ENCODE measurements at regions of chr4 and their contacts with region 1.

Region 1: GRCh38 chr4:176377780-176378179 is 58.0 kb downstream of the SPCS3 start:
- DNase-seq: peak; percentile 41
- H3K4me3 ChIP-seq: no peak overlapping the region
- H3K27ac ChIP-seq: no peak overlapping the region
- H3K4me1 ChIP-seq: no peaks in the 10 kb centered on the region
- H3K27me3 ChIP-seq: no peaks in the 10 kb centered on the region
- CTCF ChIP-seq: peak; percentile 41 to 58

Region 2: DNA sequence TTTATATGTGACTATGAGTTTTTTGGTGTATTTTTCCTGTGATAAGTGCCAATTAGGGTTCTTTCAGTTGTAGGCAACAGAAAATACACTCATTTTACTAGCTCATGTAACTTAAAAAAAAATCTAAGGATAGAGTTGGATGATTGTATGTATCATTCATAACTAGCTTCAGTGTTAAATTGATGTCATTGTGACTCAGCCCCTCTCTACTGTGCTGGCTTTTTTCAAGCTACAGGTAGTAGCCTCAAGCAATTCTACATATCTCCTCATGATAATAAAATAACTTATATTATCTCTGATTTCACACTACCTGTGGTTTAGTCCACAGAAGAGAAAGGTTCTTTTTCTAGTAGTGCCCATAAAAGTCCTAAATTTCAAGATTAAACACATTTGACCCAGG is 300.2 kb before region 1 on chr4:
- CTCF ChIA-PET with region 1: no interaction called
- dilution Hi-C with region 1: no loop called
- in situ Hi-C with region 1: no loop called
- intact Hi-C with region 1: no loop called
- DNase-seq: no peak
- H3K4me3 ChIP-seq: no peak overlapping the region
- H3K27ac ChIP-seq: no peak overlapping the region
- H3K4me1 ChIP-seq: no peaks in the 10 kb centered on the region
- H3K27me3 ChIP-seq: no peaks in the 10 kb centered on the region
- CTCF ChIP-seq: no peak

Region 3: DNA sequence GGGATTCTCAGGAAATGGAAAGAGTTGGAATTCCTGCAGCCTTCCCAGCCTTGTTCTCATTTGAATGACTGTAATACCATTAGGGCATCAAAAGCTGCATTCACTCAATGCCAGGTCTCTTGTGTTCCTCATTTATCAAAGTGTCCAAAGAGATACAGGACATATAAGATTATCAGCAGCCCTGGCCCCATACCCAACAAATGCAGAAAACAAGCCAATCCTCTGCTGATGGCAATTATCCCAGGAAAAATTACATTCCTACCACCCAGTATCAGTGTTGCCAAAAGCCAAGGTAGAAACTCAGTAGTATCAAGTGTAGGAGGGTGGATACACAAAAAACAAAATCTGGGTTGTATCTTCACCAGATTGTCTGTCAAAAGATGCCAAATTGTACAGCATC is 90.2 kb before region 1 on chr4:
- CTCF ChIA-PET with region 1: no interaction called
- dilution Hi-C with region 1: no loop called
- in situ Hi-C with region 1: no loop called
- intact Hi-C with region 1: no loop called
- DNase-seq: no peak
- H3K4me3 ChIP-seq: no peak overlapping the region
- H3K27ac ChIP-seq: no peak overlapping the region
- H3K4me1 ChIP-seq: no peaks in the 10 kb centered on the region
- H3K27me3 ChIP-seq: peaks cover 2% of the 10 kb centered on the region
- CTCF ChIP-seq: no peak

Region 4: DNA sequence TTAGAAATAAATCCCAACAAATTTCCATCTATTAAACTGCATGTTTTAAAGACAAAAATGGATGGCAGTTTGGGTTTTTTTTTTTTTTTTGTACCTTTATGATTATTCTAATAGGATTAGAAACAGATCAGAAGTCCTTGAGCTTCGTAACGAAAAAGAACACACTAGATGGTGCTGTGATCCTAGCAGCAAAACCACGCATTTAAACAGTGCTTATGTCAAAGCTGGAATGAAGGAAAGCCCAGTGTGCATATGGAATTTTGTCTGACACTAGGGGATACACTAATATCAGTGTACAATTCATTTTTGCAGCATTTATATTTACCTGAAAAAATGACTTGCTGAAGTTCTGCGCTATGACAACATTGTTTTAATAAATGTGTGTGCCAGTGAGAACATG is 185.8 kb after region 1 on chr4:
- CTCF ChIA-PET with region 1: no interaction called
- dilution Hi-C with region 1: no loop called
- in situ Hi-C with region 1: no loop called
- intact Hi-C with region 1: loop called (anchors 2 kb)
- DNase-seq: no peak
- H3K4me3 ChIP-seq: no peak overlapping the region
- H3K27ac ChIP-seq: no peak overlapping the region
- H3K4me1 ChIP-seq: peaks cover 6% of the 10 kb centered on the region
- H3K27me3 ChIP-seq: peaks cover 1% of the 10 kb centered on the region
- CTCF ChIP-seq: peak in 1 of 2 donors; percentile 10

Region 5: DNA sequence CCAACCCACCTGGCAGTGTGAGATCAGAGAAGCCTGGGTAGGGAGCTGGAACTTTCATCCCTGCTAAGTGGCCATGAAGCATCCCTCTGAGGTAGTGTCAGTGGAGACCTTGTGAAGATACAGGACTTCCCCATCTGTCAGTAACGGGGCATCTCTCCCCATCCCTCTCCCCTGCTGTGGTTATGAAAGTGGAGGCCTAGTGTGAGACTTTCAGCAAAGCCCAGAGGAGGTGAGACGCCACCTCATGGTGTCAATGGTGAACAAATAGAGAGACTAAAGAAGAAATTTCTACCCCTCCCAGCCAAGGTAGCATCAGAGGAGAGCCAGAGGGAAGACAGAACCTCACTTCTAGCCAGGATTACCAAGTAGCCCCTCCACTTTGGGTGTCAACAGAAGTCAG is 264.7 kb after region 1 on chr4:
- CTCF ChIA-PET with region 1: no interaction called
- dilution Hi-C with region 1: no loop called
- in situ Hi-C with region 1: loop called in 1 of 2 experiments (anchors 25 kb)
- intact Hi-C with region 1: loop called (anchors 5 kb)
- DNase-seq: no peak
- H3K4me3 ChIP-seq: no peak overlapping the region
- H3K27ac ChIP-seq: no peak overlapping the region
- H3K4me1 ChIP-seq: peaks cover 12% of the 10 kb centered on the region
- H3K27me3 ChIP-seq: no peaks in the 10 kb centered on the region
- CTCF ChIP-seq: no peak

Region 6: DNA sequence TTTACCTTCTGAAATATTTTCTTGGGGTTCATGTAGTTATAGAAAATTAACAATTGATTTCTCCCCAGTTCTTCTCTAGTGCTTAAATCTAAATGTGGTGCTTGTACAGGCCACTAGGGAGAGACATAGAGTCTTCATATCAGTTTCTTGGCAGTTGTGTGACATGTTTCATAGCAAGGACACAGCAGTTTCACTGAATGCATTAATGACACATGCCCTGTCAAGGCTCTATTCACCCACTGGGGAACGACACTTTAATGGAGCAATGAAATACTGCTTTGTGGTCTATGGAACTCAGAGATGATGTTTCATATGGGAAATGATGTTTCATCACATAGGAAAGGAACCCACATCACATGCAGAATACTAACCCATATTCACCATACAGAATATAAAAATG is 412.2 kb after region 1 on chr4:
- CTCF ChIA-PET with region 1: no interaction called
- dilution Hi-C with region 1: no loop called
- in situ Hi-C with region 1: loop called in 1 of 2 experiments (anchors 25 kb)
- intact Hi-C with region 1: no loop called
- DNase-seq: peak; percentile 80
- H3K4me3 ChIP-seq: peak overlapping the region in 2 of 3 experiments; percentile 81 to 94
- H3K27ac ChIP-seq: peak overlapping the region; percentile 73
- H3K4me1 ChIP-seq: peaks cover 25% of the 10 kb centered on the region
- H3K27me3 ChIP-seq: no peaks in the 10 kb centered on the region
- CTCF ChIP-seq: peak; percentile 74 to 89

Region 7: DNA sequence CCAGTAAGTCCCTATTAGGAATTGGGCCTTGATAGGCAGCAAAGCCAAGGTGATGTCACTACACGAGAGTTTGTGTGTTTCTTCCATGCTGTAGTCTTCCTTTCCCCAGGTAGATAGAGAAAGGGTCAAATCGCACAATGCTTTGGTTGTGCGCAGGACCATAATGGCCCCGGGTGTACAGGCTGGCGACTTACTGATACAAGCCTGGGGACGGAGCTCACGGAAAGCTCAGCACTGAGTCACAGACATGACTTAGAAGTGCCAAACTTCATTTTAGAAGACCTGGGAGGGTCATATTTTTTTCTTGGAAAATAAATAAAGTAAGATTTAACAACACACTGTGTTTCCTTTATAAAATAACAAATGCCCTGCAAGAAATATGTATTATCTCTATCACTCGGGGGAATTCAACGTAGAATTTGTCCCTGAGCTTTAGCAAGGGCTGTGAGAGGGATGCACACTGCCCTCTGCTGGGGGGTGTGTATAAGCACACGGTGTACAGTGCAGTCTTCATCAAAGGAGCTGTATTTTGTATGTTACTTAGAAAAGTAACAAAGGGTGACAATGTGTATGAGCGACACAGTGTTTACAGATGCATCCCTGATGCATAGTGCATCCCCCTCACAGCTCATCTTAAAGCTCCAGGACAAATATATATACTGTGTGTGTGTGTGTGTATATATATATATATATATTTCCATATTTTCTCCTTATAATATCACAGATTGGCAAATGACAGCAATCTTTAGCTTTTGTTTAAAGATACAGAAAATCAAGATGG is 669.5 kb after region 1 on chr4:
- CTCF ChIA-PET with region 1: no interaction called
- dilution Hi-C with region 1: loop called (anchors 25 kb)
- in situ Hi-C with region 1: loop called (anchors 10 to 25 kb)
- intact Hi-C with region 1: loop called (anchors 1 kb)
- DNase-seq: peak; percentile 49
- H3K4me3 ChIP-seq: no peak overlapping the region
- H3K27ac ChIP-seq: no peak overlapping the region
- H3K4me1 ChIP-seq: no peaks in the 10 kb centered on the region
- H3K27me3 ChIP-seq: no peaks in the 10 kb centered on the region
- CTCF ChIP-seq: peak; percentile 85 to 88

Region 8: GRCh38 chr4:177250056-177250696 is 872.4 kb after region 1 on chr4:
- CTCF ChIA-PET with region 1: no interaction called
- dilution Hi-C with region 1: no loop called
- in situ Hi-C with region 1: no loop called
- intact Hi-C with region 1: loop called (anchors 5 kb)
- DNase-seq: peak; percentile 58
- H3K4me3 ChIP-seq: no peak overlapping the region
- H3K27ac ChIP-seq: no peak overlapping the region
- H3K4me1 ChIP-seq: no peaks in the 10 kb centered on the region
- H3K27me3 ChIP-seq: peaks cover 2% of the 10 kb centered on the region
- CTCF ChIP-seq: peak; percentile 99 to 100

Region 9: DNA sequence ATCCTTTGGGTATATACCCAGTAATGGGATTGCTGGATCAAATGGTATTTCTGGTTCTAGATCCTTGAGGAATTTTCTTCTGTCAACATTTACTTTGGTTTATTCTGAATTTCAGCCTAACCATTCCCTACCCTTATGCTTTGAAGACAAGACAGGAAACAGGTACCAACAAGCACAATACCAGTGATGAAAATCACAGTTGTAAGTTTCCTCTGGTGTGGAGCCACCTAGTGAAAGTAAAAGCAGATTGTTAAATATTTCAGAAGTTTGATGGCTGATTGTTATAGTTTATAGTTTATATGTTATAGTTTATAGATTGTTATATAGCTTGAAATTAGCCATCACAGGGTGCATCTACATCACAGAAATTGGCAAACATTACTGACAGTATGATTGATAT is 1169.0 kb after region 1 on chr4:
- CTCF ChIA-PET with region 1: no interaction called
- dilution Hi-C with region 1: no loop called
- in situ Hi-C with region 1: no loop called
- intact Hi-C with region 1: loop called (anchors 10 kb)
- DNase-seq: peak; percentile 24
- H3K4me3 ChIP-seq: no peak overlapping the region
- H3K27ac ChIP-seq: no peak overlapping the region
- H3K4me1 ChIP-seq: no peaks in the 10 kb centered on the region
- H3K27me3 ChIP-seq: no peaks in the 10 kb centered on the region
- CTCF ChIP-seq: peak; percentile 17 to 53

Measured in mammary epithelial cell (primary cell).